Activated CD4-positive, alpha-beta memory T cell treated with anti-CD3 and anti-CD28 coated beads, Interleukin-2, amount 10 ng/mL, durations not matched to agents 7 days and 5 days (primary cell): ENCODE measurements at regions of chr1 and their contacts with region 1.

Region 1: GRCh38 chr1:21255278-21255942 is 34.9 kb downstream of the ECE1 start:
- DNase-seq: peak; percentile 85
- H3K4me3 Mint-ChIP-seq: no peak overlapping the region
- H3K27ac Mint-ChIP-seq: peak overlapping the region; percentile 17
- H3K4me1 Mint-ChIP-seq: peaks cover 40% of the 10 kb centered on the region
- H3K27me3 Mint-ChIP-seq: no peaks in the 10 kb centered on the region

Region 2: GRCh38 chr1:21225065-21225464 is 30.3 kb before region 1 on chr1:
- CTCF ChIA-PET with region 1: no interaction called
- POLR2A ChIA-PET with region 1: no interaction called
- DNase-seq: no peak
- H3K4me3 Mint-ChIP-seq: no peak overlapping the region
- H3K27ac Mint-ChIP-seq: no peak overlapping the region
- H3K4me1 Mint-ChIP-seq: no peaks in the 10 kb centered on the region
- H3K27me3 Mint-ChIP-seq: no peaks in the 10 kb centered on the region

Region 3: GRCh38 chr1:21244986-21245687 is 10.3 kb before region 1 on chr1:
- CTCF ChIA-PET with region 1: interaction called, 23 read pairs
- POLR2A ChIA-PET with region 1: interaction called, 4 read pairs
- DNase-seq: no peak
- H3K4me3 Mint-ChIP-seq: no peak overlapping the region
- H3K27ac Mint-ChIP-seq: no peak overlapping the region
- H3K4me1 Mint-ChIP-seq: no peaks in the 10 kb centered on the region
- H3K27me3 Mint-ChIP-seq: no peaks in the 10 kb centered on the region

Region 4: GRCh38 chr1:21324368-21325141 is 69.1 kb after region 1 on chr1:
- CTCF ChIA-PET with region 1: interaction called, 10 read pairs
- POLR2A ChIA-PET with region 1: no interaction called
- DNase-seq: peak; percentile 63
- H3K4me3 Mint-ChIP-seq: peak overlapping the region; percentile 40
- H3K27ac Mint-ChIP-seq: peak overlapping the region; percentile 72
- H3K4me1 Mint-ChIP-seq: peaks cover 67% of the 10 kb centered on the region
- H3K27me3 Mint-ChIP-seq: no peaks in the 10 kb centered on the region

Region 5: GRCh38 chr1:21334214-21335087 is 79.0 kb after region 1 on chr1:
- CTCF ChIA-PET with region 1: interaction called, 21 read pairs
- POLR2A ChIA-PET with region 1: interaction called, 6 read pairs
- DNase-seq: peak; percentile 89
- H3K4me3 Mint-ChIP-seq: peak overlapping the region; percentile 73
- H3K27ac Mint-ChIP-seq: peak overlapping the region; percentile 94
- H3K4me1 Mint-ChIP-seq: peaks cover 89% of the 10 kb centered on the region
- H3K27me3 Mint-ChIP-seq: no peaks in the 10 kb centered on the region

Region 6: DNA sequence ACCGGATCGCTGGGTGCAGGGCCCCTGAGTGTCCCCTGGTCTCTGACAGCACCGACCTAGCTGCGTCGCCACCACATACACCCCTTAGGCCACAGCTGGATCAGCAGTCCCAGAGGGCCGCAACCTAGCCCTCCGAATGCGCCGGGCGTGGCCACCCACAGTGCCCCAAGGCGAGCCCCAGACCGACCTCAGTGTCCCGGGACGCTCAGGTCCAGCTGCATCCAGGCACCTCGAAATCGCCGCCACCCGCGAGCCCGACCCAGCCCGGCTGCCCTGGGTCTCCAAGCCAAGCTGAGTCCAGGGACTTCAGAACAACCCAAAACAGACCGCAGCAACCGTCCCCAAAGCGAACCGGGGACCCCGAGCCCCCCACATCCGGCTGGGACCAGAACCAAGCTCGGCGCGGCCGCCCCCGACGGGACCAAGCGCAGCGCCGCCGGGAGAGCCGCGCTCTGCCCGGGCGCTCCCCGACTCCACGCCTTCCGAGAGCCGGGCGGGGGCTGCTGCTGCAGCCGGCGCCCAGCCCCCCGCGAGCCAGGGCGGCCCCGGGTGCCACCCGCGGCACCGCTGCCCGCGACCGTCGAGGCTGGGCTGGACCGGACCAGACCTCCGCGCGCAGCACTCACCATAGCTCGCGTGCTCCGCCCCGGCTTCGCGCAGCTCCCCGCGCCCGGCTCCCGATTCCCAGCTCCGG is 89.5 kb after region 1 on chr1:
- CTCF ChIA-PET with region 1: interaction called, 10 read pairs
- POLR2A ChIA-PET with region 1: interaction called, 4 read pairs
- DNase-seq: peak; percentile 36
- H3K4me3 Mint-ChIP-seq: peak overlapping the region; percentile 83
- H3K27ac Mint-ChIP-seq: peak overlapping the region; percentile 88
- H3K4me1 Mint-ChIP-seq: peaks cover 41% of the 10 kb centered on the region
- H3K27me3 Mint-ChIP-seq: no peaks in the 10 kb centered on the region

Region 7: GRCh38 chr1:21368515-21369289 is 113.3 kb after region 1 on chr1:
- CTCF ChIA-PET with region 1: interaction called, 186 read pairs
- POLR2A ChIA-PET with region 1: interaction called, 16 read pairs
- DNase-seq: peak; percentile 60
- H3K4me3 Mint-ChIP-seq: no peak overlapping the region
- H3K27ac Mint-ChIP-seq: no peak overlapping the region
- H3K4me1 Mint-ChIP-seq: peaks cover 9% of the 10 kb centered on the region
- H3K27me3 Mint-ChIP-seq: no peaks in the 10 kb centered on the region